Heart right ventricle (tissue), 16 donors: ENCODE measurements at regions of chr15 and their contacts with region 1.

Region 1: DNA sequence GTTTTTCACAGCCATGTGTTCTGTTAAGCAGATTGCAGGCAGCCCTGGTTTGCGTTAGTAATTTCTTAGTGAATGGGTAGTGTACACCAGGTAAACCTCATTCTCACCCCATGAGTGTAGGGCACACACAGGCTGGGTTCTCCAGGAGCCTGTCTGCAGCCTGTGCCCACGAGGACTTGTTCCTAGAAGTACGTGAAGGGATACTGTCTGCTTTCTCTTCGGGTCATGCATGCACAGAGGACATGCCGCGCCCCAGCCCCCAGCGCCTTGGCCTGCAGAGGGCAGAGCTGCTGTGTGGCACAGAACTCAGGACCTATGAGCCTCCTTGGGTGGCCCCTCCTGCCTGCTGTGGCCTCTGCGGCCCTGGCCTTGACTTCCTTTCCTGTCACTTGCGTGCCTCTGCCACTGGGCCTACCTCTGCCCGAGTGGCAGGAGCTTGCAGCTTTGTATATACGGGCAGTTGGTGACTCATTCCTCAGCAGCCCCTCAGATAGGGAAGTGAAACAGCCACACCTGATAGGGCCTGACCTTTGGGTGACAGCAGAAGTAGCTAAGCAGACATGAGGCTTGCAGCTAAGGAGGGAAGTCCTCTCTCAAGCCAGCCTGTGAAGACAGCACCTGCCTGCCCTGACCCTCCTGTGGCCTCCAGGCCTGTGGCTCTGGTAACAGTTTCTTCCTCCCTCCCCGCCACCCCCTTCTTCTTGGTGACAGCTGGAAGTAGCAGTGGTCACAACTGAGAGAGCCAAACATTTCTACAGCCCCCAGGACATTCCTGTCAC is 19.5 kb downstream of the PPCDC start:
- DNase-seq: peak; percentile 83
- ATAC-seq: peak; percentile 44 to 79 (median 68)
- H3K4me3 ChIP-seq: peak overlapping the region in 2 of 10 donors; percentile 28 to 32
- H3K27ac ChIP-seq: peak overlapping the region; percentile 82 to 98 (median 92)
- H3K4me1 ChIP-seq: peaks cover 43 to 92% (median 65%) of the 10 kb centered on the region in 9 donors
- H3K27me3 ChIP-seq: no peaks in the 10 kb centered on the region
- CTCF ChIP-seq: peak; percentile 36 to 79 (median 65)

Region 2: DNA sequence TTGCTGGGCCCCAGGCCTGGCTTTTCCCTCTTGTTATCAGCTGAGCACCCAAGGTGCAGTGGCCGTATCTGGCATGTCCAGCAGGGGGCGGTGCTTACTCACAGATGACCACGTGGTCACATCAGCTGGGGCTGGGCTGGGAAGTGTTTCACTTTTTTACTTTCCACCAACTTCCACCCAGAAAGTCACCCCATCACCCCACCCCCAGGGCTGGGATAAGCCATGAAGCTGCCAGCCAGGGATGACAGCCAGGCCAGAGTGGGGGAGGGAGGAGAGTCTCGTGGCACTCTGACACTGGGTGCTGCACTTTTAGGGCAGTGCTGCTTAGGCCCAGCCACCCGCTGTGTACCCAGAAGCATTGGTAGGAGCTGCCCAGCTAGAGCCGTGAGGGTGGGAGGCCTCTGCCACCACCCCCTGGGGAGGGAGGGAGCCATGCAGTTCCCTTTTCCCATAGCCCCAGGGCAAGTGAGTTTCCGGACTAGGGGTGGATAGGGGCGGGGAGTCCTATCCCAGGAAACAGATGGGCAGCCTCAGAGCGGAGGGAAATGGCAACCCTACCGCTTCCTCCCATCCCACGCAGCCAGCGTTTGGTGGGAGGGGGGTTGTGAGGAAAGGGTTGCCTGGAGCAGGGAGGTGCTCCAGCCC is 13.4 kb before region 1 on chr15:
- intact Hi-C with region 1: loop called in 1 of 10 experiments (anchors 1 kb)
- DNase-seq: peak; percentile 93 to 94
- ATAC-seq: peak; percentile 83 to 94 (median 90)
- H3K4me3 ChIP-seq: peak overlapping the region in 7 of 10 donors; percentile 12 to 40 (median 32)
- H3K27ac ChIP-seq: peak overlapping the region; percentile 4 to 89 (median 82)
- H3K4me1 ChIP-seq: peaks cover 13 to 66% (median 46%) of the 10 kb centered on the region in 9 donors
- H3K27me3 ChIP-seq: no peaks in the 10 kb centered on the region
- CTCF ChIP-seq: peak; percentile 84 to 97 (median 95)

Region 3: GRCh38 chr15:75090388-75090734 is 47.4 kb after region 1 on chr15:
- intact Hi-C with region 1: loop called in 3 of 10 experiments (anchors 2 kb)
- DNase-seq: peak; percentile 32 to 79
- ATAC-seq: peak; percentile 95 to 100 (median 98)
- H3K4me3 ChIP-seq: peak overlapping the region in 2 of 10 donors; percentile 2 to 10
- H3K27ac ChIP-seq: peak overlapping the region; percentile 61 to 91 (median 80)
- H3K4me1 ChIP-seq: peaks cover 0 to 18% (median 6%) of the 10 kb centered on the region in 9 donors
- H3K27me3 ChIP-seq: no peaks in the 10 kb centered on the region
- CTCF ChIP-seq: no peak

Region 4: GRCh38 chr15:75130597-75131268 is 87.8 kb after region 1 on chr15:
- intact Hi-C with region 1: no loop called
- DNase-seq: no peak
- ATAC-seq: peak in 2 of 8 donors; percentile 24 to 62
- H3K4me3 ChIP-seq: peak overlapping the region in 1 of 10 donors; percentile 20
- H3K27ac ChIP-seq: peak overlapping the region in 3 of 10 donors; percentile 29 to 81 (median 44)
- H3K4me1 ChIP-seq: peaks cover 0 to 51% (median 0%) of the 10 kb centered on the region in 9 donors
- H3K27me3 ChIP-seq: no peaks in the 10 kb centered on the region
- CTCF ChIP-seq: no peak